Spleen (tissue), 13 donors: ENCODE measurements at regions of chr20 and their contacts with region 1.

Region 1: DNA sequence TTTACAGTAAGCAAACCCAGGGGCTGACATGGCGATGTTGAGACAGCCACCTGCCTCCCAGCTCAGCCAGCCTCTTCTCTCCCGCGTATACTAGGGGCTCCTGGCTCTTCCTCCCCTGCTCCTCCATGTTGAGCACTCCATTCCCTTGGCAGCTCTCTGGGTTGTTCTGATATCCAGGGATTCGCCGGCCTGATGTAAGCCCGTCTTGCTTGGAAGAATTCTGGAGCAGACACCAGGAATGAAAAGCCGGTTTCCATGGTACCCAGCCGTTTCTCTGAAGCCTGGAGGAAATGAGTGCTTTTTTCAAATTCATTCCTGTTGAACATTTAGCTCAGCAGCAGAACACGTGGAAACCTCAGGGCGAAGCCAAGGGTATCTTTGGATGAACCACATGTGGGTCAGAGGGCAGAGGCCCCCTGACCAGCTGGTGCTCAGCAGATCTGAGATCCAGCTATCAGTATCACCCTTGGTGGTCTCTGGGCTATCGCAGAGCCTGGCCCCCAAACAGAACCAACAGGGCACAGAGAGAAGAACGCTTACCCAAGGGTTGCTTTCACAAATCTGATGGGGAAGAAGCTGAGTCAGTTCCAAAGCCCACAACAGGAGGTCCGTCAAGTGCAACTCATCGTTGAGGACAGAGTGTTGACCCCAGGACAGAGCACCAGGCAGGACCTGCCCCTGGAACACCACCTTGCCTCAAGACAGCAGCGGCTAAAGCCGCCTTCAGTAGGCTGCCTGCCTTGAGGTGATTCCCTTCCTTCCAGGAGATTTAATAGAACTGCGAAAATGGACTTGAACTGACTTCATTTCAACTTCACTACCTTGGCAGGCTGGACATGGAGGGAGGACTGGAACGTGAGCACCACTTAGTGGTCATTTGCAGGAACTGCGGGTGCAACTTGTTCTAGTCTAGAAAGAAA is 96.1 kb upstream of the RIN2 start:
- DNase-seq: peak; percentile 78
- H3K4me3 ChIP-seq: no peak overlapping the region
- H3K27ac ChIP-seq: no peak overlapping the region
- H3K4me1 ChIP-seq: peaks cover 0 to 14% (median 4%) of the 10 kb centered on the region in 6 donors
- H3K27me3 ChIP-seq: peaks cover 0 to 22% (median 0%) of the 10 kb centered on the region in 7 donors
- CTCF ChIP-seq: peak; percentile 86 to 94 (median 90)
- POLR2A ChIP-seq: no peak

Region 2: GRCh38 chr20:18632196-18633009 is 1029.6 kb before region 1 on chr20:
- intact Hi-C with region 1: loop called (anchors 10 kb)
- DNase-seq: peak; percentile 87
- H3K4me3 ChIP-seq: no peak overlapping the region
- H3K27ac ChIP-seq: no peak overlapping the region
- H3K4me1 ChIP-seq: no peaks in the 10 kb centered on the region
- H3K27me3 ChIP-seq: no peaks in the 10 kb centered on the region
- CTCF ChIP-seq: peak; percentile 18 to 89 (median 74)
- POLR2A ChIP-seq: no peak

Region 3: GRCh38 chr20:19205977-19206396 is 456.0 kb before region 1 on chr20:
- intact Hi-C with region 1: loop called (anchors 10 kb)
- DNase-seq: peak; percentile 90
- H3K4me3 ChIP-seq: no peak overlapping the region
- H3K27ac ChIP-seq: no peak overlapping the region
- H3K4me1 ChIP-seq: peaks cover 0 to 6% (median under 1%) of the 10 kb centered on the region in 6 donors
- H3K27me3 ChIP-seq: peaks cover 0 to 44% (median 8%) of the 10 kb centered on the region in 7 donors
- CTCF ChIP-seq: peak; percentile 18 to 83 (median 72)
- POLR2A ChIP-seq: no peak